ENCODE measurements at regions of chr9 and their contacts with region 1.

Region 1: GRCh38 chr9:125407974-125408900 is 146.6 kb downstream of the GAPVD1 start:
- DNase-seq: peak; percentile 58 to 80
- H3K4me3 ChIP-seq: peak overlapping the region; percentile 49 to 57
- H3K27ac ChIP-seq: no peak overlapping the region
- H3K4me1 ChIP-seq: peaks cover 0 to 14% (median 13%) of the 10 kb centered on the region in 4 donors
- H3K27me3 ChIP-seq: peaks cover 0 to 23% of the 10 kb centered on the region in 2 donors
- CTCF ChIP-seq: peak; percentile 87 to 93

Region 2: GRCh38 chr9:125631391-125632085 is 223.3 kb after region 1 on chr9:
- intact Hi-C with region 1: loop called (anchors 5 kb)
- DNase-seq: no peak
- H3K4me3 ChIP-seq: no peak overlapping the region
- H3K27ac ChIP-seq: no peak overlapping the region
- H3K4me1 ChIP-seq: peaks cover 0 to 16% (median 5%) of the 10 kb centered on the region in 4 donors
- H3K27me3 ChIP-seq: no peaks in the 10 kb centered on the region
- CTCF ChIP-seq: peak; percentile 47 to 53

Region 3: DNA sequence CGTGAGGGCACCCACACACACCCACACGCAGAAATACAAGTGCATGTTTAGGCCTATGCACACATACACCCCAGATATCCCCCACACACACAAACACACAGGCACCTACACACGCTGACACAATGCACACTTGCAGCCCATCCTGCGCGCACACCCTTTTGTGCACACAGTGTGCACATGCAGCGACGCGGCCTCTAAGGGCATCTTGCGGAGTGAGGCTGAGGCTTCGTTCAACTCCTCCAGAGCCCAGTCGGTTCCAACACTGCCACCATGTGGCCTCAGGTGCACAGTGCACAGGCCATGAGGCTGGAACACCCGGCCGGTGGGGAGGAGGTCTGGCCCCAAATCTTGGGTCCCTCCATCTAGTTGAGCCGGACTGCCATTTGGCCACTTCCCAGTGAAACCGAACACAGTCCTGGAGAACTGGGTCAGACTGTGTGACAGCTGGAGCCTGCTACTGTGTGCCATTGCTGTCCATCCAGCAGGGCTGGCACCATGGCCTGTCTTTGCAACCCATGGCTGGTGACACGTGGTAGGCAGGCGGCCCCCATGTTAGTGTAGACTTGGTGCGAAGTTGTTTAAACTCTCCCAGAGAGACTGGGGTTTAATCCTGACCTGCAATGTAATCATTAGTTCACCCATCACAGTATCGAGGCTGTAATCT is 820.7 kb after region 1 on chr9:
- intact Hi-C with region 1: loop called (anchors 5 kb)
- DNase-seq: peak; percentile 62 to 69
- H3K4me3 ChIP-seq: no peak overlapping the region
- H3K27ac ChIP-seq: no peak overlapping the region
- H3K4me1 ChIP-seq: no peaks in the 10 kb centered on the region
- H3K27me3 ChIP-seq: peaks cover 0 to 53% of the 10 kb centered on the region in 2 donors
- CTCF ChIP-seq: peak; percentile 85 to 89